ENCODE measurements at regions of chr5 and their contacts with region 1.

Region 1: GRCh38 chr5:79612667-79613198 is 492 bp downstream of the TENT2 start:
- DNase-seq: no peak
- ATAC-seq: peak; percentile 7 to 56
- H3K4me3 ChIP-seq: peak overlapping the region; percentile 74 to 99 (median 94)
- H3K27ac ChIP-seq: peak overlapping the region; percentile 88 to 98 (median 97)
- H3K4me1 ChIP-seq: peaks cover 9 to 16% of the 10 kb centered on the region in 2 donors
- H3K27me3 ChIP-seq: no peaks in the 10 kb centered on the region
- CTCF ChIP-seq: no peak
- POLR2A ChIP-seq: no peak

Region 2: GRCh38 chr5:79235634-79236363 is 376.9 kb before region 1 on chr5 and contains the start of gene JMY:
- in situ Hi-C with region 1: no loop called
- intact Hi-C with region 1: loop called (anchors 10 kb)
- DNase-seq: peak; percentile 78 to 81
- ATAC-seq: peak; percentile 83 to 86
- H3K4me3 ChIP-seq: peak within 1 kb of the TSS; percentile 70 to 96 (median 86)
- H3K27ac ChIP-seq: peak within 1 kb of the TSS; percentile 85 to 96 (median 95)
- H3K4me1 ChIP-seq: peaks cover 31 to 33% of the 10 kb centered on the region in 2 donors
- H3K27me3 ChIP-seq: no peaks in the 10 kb centered on the region
- CTCF ChIP-seq: peak in 1 of 5 experiments; percentile 37
- POLR2A ChIP-seq: peak; percentile 92 to 98
- total RNA-seq, gene JMY: 11.4 to 26.7 (median 16.8) TPM

Region 3: GRCh38 chr5:79514391-79515105 is 98.2 kb before region 1 on chr5:
- in situ Hi-C with region 1: no loop called
- intact Hi-C with region 1: loop called (anchors 1 kb)
- DNase-seq: peak; percentile 89 to 96
- ATAC-seq: peak; percentile 81 to 84
- H3K4me3 ChIP-seq: peak overlapping the region; percentile 78 to 91 (median 82)
- H3K27ac ChIP-seq: peak overlapping the region; percentile 93 to 97 (median 96)
- H3K4me1 ChIP-seq: peaks cover 9 to 18% of the 10 kb centered on the region in 2 donors
- H3K27me3 ChIP-seq: no peaks in the 10 kb centered on the region
- CTCF ChIP-seq: no peak
- POLR2A ChIP-seq: peak; percentile 34 to 97

Region 4: GRCh38 chr5:79546782-79547428 is 65.8 kb before region 1 on chr5:
- in situ Hi-C with region 1: no loop called
- intact Hi-C with region 1: no loop called
- DNase-seq: no peak
- ATAC-seq: peak; percentile 42 to 49
- H3K4me3 ChIP-seq: peak overlapping the region in 2 of 4 donors; percentile 7 to 44
- H3K27ac ChIP-seq: peak overlapping the region; percentile 80 to 83 (median 80)
- H3K4me1 ChIP-seq: peaks cover 24 to 30% of the 10 kb centered on the region in 2 donors
- H3K27me3 ChIP-seq: no peaks in the 10 kb centered on the region
- CTCF ChIP-seq: no peak
- POLR2A ChIP-seq: no peak

Region 5: GRCh38 chr5:79689541-79690466 is 77.1 kb after region 1 on chr5 and contains the start of gene CMYA5:
- in situ Hi-C with region 1: no loop called
- intact Hi-C with region 1: loop called (anchors 1 kb)
- DNase-seq: peak; percentile 94 to 98
- ATAC-seq: peak; percentile 75 to 79
- H3K4me3 ChIP-seq: peak within 1 kb of the TSS; percentile 75 to 83 (median 81)
- H3K27ac ChIP-seq: peak within 1 kb of the TSS; percentile 99
- H3K4me1 ChIP-seq: peaks cover 10 to 11% of the 10 kb centered on the region in 2 donors
- H3K27me3 ChIP-seq: no peaks in the 10 kb centered on the region
- CTCF ChIP-seq: no peak
- POLR2A ChIP-seq: peak; percentile 95
- total RNA-seq, gene CMYA5: 3,049 to 3,867 (median 3,338) TPM

Region 6: GRCh38 chr5:79831381-79832309 is 218.9 kb after region 1 on chr5:
- in situ Hi-C with region 1: no loop called
- intact Hi-C with region 1: loop called (anchors 5 kb)
- DNase-seq: peak; percentile 72 to 88
- ATAC-seq: peak; percentile 72 to 76
- H3K4me3 ChIP-seq: no peak overlapping the region
- H3K27ac ChIP-seq: peak overlapping the region; percentile 59 to 72 (median 68)
- H3K4me1 ChIP-seq: peaks cover 42 to 47% of the 10 kb centered on the region in 2 donors
- H3K27me3 ChIP-seq: no peaks in the 10 kb centered on the region
- CTCF ChIP-seq: no peak
- POLR2A ChIP-seq: no peak

Measured in gastrocnemius medialis (tissue), 4 donors.